SK-N-SH (cell line): ENCODE measurements at regions of chr1 and their contacts with region 1.

Region 1: DNA sequence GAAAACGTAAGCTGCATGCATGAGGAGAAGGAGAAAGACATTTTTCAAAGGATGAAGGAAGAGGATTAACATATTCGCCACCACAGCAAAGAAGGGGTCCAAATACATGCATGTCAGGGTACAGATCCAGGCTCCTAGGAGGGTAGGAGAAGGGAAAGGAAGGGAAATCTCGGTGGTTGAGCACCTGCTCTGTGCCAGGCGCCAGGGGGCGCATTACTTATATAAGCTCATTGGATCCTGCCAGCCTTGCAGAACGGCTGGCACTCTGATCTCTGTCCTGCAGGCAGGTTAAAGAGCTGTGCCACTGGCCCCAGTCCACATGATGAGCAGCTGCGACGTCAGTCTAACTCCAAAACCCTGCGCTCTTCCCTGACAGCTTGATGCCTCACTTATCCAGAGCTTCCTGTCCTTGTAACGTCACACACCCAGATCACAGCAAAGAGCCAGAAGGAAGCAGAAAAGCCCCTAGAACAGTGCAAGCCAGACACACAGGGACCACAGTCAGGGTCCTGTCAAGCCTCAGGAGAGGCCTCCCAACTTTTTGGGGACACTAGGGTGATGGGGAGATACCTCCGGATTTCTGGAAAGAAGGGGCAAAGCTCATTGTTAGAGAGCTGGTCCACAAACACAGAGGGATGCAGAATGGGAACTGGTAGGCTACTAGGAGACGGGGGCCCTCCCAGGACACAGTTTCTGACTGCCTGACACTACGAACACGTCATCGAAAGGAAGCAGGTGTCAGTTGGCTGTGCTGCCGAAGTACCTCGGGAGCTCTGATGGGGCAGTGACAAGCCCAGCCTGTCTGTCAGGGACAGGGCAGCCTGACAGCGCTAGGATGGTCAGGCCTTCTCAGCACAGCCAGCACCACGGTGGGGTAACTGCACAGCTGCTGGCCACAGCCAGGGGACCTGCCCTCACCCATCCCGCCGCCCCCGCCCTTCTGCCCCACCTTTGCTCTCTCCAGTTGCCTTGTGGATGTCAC is 99.1 kb downstream of the BEND5 start:
- DNase-seq: peak; percentile 82
- H3K4me3 ChIP-seq: no peak overlapping the region
- H3K27ac ChIP-seq: no peak overlapping the region
- H3K4me1 ChIP-seq: peaks cover 0 to 4% of the 10 kb centered on the region in 2 experiments; a peak in 1 of 4 replicates
- H3K27me3 ChIP-seq: no peaks in the 10 kb centered on the region
- CTCF ChIP-seq: peak; percentile 77
- EP300 ChIP-seq: no peak
- RAD21 ChIP-seq: peak; percentile 74

Region 2: DNA sequence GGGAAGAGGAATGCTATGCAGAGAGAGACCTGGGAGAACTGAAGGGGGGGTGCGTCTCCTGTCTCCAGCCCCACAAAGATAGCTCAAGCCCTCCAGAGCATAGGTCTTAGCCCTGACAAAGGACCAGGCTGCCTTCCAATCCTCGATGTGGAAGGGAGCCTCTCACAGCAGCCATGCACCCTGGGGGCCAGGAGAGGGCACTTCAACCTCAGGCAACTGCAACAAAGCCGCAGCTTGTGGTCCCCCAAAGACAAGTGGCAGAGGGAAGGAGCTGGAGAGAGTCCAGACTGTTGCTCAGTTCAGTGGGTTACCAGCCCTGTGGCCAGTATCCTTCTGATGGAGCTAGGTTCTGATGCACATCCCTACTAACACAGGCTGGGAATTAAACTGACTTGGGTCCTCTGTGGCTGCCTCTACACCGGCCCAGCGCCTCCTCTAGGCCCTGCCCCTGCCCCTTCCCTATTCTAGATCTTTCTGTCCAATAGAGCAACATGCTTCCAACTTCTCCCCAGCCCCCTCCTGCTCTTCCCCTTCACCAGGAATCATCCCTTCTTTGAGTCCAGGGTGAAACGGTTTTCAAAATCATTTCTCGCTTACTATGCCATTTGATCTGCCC is 104.8 kb before region 1 on chr1:
- CTCF ChIA-PET with region 1: interaction called, 162 read pairs
- POLR2A ChIA-PET with region 1: no interaction called
- DNase-seq: peak; percentile 80
- H3K4me3 ChIP-seq: peak overlapping the region in 1 of 2 experiments; percentile 46; a peak in 1 of 4 replicates
- H3K27ac ChIP-seq: no peak overlapping the region
- H3K4me1 ChIP-seq: peaks cover 0 to 4% of the 10 kb centered on the region in 2 experiments; a peak in 1 of 4 replicates
- H3K27me3 ChIP-seq: no peaks in the 10 kb centered on the region
- CTCF ChIP-seq: peak; percentile 78
- EP300 ChIP-seq: no peak
- RAD21 ChIP-seq: peak; percentile 100

Region 3: DNA sequence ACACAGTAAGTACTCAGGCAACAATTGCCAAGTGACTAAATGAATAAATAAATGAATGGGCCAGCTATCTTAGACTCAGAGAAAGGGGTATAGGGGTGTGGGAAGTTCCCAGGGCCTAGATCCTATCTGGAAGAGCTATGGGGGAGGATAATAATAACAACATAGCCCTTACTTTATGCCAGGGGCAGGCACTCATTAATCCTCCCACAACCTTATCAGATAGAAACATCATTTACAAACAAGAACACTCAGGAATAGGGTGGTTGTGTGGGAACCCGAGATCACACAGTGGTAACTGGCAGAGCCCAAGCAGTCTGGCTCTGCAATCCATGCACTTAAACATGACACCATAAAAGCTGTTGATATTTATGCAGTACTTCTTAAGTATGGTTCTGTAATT is 77.4 kb before region 1 on chr1:
- CTCF ChIA-PET with region 1: interaction called, 10 read pairs
- POLR2A ChIA-PET with region 1: no interaction called
- DNase-seq: no peak
- H3K4me3 ChIP-seq: no peak overlapping the region
- H3K27ac ChIP-seq: no peak overlapping the region
- H3K4me1 ChIP-seq: peaks cover 0 to 3% of the 10 kb centered on the region in 2 experiments; a peak in 1 of 4 replicates
- H3K27me3 ChIP-seq: no peaks in the 10 kb centered on the region
- CTCF ChIP-seq: no peak
- EP300 ChIP-seq: no peak
- RAD21 ChIP-seq: no peak

Region 4: DNA sequence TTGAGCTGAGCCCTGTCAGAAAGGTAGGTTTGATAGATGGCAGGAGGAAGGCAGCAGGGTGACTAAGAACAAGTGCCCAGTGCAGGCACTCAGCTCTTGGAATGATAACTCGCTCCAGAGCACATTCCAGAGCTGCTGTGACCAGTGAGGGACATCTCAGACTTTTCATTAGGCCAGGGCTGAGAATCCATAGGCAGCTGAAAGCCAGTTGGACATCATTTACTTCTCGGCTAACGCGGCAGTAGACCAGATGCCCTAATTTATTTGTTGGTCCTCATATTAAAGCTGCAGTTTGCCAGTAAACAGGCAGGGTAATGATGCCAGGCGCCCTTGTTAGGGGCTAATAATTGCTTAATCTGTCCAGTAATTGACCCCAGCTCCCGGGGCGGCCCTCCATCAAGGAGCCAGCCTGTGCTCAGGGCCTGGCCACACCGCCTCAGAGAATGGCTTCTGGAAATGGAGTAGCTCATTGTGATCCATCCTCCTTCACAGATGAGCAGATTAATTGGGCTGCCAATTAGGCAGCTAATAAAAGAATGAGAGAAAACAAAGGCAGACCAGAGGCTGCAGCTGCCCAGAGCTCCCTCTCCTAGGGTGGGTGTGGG is 22.9 kb before region 1 on chr1:
- CTCF ChIA-PET with region 1: interaction called, 78 read pairs
- POLR2A ChIA-PET with region 1: interaction called, 3 read pairs
- DNase-seq: peak; percentile 81
- H3K4me3 ChIP-seq: no peak overlapping the region
- H3K27ac ChIP-seq: peak overlapping the region in 1 of 2 experiments; percentile 47; a peak in 1 of 4 replicates
- H3K4me1 ChIP-seq: peaks cover 0 to 30% of the 10 kb centered on the region in 2 experiments; a peak in 2 of 4 replicates
- H3K27me3 ChIP-seq: no peaks in the 10 kb centered on the region
- CTCF ChIP-seq: no peak
- EP300 ChIP-seq: peak in 1 of 2 experiments; percentile 97; a peak in 2 of 4 replicates
- RAD21 ChIP-seq: peak; percentile 27; the same call in 1 of the 2 replicates

Region 5: DNA sequence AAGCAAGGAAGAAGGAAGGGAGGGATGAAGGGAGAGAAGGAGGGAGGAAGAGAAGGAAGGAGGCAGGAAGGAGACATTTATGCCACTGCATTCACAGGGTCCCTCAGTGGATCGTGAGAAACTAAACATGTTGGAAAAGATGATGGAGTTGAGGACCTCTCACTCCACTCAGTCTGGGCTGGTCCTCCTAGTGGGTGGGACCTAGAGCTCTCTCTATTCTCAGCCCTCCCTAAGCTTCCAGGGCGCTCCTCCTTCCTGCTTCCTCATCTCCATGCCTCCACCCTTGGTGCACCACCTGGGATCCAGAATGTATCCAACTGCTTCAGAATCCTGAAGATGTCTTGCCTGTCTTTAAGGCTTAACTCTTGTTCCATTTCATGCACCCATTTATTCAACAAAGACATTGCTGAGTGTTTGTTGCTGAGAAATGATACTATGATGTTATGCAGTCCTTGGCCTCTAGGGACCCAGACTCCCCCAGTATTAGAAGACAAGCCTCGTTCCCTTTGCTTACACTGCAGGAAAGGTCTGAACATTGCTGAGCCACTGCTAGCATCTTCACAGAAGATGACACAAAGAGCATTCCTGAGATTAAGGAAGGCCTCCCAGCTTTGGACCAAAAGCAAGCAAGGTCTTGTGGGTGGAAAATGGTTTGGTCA is 10.6 kb after region 1 on chr1:
- CTCF ChIA-PET with region 1: interaction called, 86 read pairs
- POLR2A ChIA-PET with region 1: no interaction called
- DNase-seq: peak; percentile 36
- H3K4me3 ChIP-seq: no peak overlapping the region
- H3K27ac ChIP-seq: no peak overlapping the region
- H3K4me1 ChIP-seq: peaks cover 0 to 2% of the 10 kb centered on the region in 2 experiments; a peak in 1 of 4 replicates
- H3K27me3 ChIP-seq: peaks cover 6% of the 10 kb centered on the region; the same call in 1 of the 2 replicates
- CTCF ChIP-seq: peak; percentile 53
- EP300 ChIP-seq: no peak
- RAD21 ChIP-seq: no peak

Region 6: GRCh38 chr1:48710318-48710717 is 32.7 kb after region 1 on chr1:
- CTCF ChIA-PET with region 1: interaction called, 20 read pairs
- POLR2A ChIA-PET with region 1: no interaction called
- DNase-seq: no peak
- H3K4me3 ChIP-seq: no peak overlapping the region
- H3K27ac ChIP-seq: no peak overlapping the region
- H3K4me1 ChIP-seq: peaks cover 0 to 23% of the 10 kb centered on the region in 2 experiments; a peak in 2 of 4 replicates
- H3K27me3 ChIP-seq: no peaks in the 10 kb centered on the region
- CTCF ChIP-seq: no peak
- EP300 ChIP-seq: no peak
- RAD21 ChIP-seq: no peak

Region 7: DNA sequence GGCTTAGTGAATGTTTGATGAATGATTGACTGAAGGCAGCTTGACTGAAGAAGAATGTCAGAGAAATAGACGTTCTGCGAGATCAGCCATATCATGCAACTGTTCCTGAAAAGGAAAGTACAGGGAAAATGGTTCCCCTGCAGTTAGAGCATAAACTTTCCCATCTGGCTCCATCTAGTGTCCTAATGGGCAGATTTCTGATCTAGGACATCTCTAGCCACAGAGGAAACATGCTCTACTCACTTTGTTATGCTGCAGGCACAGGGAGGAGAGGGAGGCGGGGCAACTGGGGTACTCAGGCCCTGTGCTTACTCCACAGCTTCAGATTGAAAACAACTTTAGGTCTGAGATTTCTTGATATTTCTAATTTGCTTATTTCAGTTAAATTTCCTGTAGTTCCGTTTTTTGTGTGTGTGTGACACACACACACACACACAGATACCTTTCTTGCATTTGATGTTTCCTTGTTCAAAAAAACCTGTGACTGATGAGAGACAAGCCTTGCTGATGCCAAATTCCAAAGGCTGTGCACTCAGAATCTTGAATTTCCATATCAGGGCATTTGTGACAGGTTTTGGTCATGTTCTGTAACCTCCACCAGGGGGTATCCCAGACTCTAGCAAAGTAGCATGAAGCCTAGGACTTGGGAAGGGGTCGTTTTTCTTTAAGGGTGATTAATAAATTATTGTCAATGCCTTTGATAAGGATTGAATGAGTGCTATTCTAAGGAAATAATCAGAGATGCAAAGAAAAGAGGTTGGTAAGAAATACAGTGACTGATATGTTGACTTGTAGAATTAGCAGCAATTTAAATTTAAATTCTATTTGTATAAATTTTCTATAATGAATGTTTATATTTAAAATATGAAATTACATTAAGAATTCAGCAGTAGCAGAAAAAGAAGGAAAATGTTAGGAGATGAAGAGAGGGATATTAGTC is 238.8 kb after region 1 on chr1:
- CTCF ChIA-PET with region 1: interaction called, 13 read pairs
- POLR2A ChIA-PET with region 1: no interaction called
- DNase-seq: peak; percentile 63
- H3K4me3 ChIP-seq: peak overlapping the region in 1 of 2 experiments; percentile 20; a peak in 1 of 4 replicates
- H3K27ac ChIP-seq: peak overlapping the region; percentile 78 to 98
- H3K4me1 ChIP-seq: peaks cover 13 to 31% of the 10 kb centered on the region in 2 experiments
- H3K27me3 ChIP-seq: no peaks in the 10 kb centered on the region
- CTCF ChIP-seq: peak; percentile 74
- EP300 ChIP-seq: no peak
- RAD21 ChIP-seq: peak; percentile 91